Left colon (tissue), 2 donors: ENCODE measurements at regions of chr9 and their contacts with region 1.

Region 1: DNA sequence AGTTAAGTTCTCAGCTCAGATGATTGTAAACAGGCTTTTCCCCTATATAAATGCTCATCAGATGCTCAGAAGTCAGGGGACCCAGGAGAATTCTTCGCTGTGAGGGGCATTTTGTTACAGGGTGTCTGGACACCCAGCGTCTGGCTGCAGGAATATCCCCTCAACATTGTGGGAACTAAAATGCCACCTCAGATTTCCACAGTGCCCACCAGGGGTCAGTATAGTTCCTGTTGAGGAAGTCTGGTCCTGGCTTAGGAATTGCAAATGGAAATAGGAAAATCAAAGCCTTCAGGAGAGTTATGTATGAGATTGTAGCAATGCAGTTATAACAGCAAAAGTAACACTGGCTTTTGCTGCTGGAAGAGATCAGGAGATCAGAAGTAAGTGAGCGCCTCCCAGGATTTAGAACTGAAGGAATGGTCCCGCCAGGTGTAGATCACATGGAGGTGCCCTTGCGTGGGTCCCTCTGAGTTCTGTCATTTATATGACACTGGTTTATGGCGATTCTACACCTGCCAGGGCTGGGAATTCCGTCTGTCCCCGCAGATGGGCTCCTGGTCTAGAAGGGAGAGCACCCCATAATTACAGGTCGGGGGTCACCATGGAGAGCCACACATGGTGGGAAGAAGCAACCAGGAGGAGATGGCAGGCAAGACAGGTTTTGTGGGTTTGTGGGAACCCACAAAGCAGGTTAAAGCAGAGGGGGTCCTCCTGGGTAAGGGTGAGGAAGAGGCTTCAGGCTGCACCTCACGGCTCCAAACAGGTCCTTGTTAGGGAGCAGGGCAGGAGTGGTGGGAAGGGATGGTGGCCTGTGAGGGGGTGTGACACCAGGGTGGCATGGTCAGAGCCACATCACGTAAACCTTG is 47.0 kb upstream of the CTSL start:
- DNase-seq: peak in 1 of 2 donors; percentile 54
- ATAC-seq: peak; percentile 61

Region 2: DNA sequence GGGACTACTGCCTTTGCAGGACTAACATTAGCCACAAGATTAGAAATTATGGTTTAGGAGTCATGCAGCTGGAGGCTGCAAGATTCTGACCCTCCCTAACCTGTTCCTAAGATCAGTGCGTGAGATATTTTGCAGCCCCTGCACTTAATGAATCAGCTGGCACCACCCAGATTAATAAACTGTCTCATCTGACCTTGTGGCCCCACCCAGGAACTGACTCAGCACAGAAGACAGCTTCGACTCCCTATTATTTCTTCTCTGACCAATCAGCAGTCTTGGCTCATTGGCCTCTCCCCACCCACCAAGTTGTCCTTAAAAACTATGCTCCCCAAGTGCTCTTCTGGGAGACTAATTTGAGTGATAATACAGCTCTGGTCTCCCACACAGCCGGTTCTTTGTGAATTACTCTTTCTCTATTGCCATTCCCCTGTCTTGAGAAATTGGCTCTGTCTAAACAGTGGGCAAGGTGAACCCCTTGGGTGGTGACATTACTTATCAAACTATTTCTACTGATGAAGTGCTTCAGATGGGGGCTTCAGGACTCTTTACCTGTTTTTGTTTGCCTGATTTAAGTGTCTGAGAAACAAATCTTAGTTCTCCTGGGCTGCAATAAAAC is 64.0 kb after region 1 on chr9:
- intact Hi-C with region 1: no loop called
- DNase-seq: no peak
- ATAC-seq: no peak

Region 3: GRCh38 chr9:88041447-88041846 is 362.6 kb after region 1 on chr9:
- intact Hi-C with region 1: loop called in 1 of 2 experiments (anchors 5 kb)
- DNase-seq: no peak
- ATAC-seq: peak; percentile 44